HCT116 (cell line): ENCODE measurements at regions of chr5 and their contacts with region 1.

Region 1: DNA sequence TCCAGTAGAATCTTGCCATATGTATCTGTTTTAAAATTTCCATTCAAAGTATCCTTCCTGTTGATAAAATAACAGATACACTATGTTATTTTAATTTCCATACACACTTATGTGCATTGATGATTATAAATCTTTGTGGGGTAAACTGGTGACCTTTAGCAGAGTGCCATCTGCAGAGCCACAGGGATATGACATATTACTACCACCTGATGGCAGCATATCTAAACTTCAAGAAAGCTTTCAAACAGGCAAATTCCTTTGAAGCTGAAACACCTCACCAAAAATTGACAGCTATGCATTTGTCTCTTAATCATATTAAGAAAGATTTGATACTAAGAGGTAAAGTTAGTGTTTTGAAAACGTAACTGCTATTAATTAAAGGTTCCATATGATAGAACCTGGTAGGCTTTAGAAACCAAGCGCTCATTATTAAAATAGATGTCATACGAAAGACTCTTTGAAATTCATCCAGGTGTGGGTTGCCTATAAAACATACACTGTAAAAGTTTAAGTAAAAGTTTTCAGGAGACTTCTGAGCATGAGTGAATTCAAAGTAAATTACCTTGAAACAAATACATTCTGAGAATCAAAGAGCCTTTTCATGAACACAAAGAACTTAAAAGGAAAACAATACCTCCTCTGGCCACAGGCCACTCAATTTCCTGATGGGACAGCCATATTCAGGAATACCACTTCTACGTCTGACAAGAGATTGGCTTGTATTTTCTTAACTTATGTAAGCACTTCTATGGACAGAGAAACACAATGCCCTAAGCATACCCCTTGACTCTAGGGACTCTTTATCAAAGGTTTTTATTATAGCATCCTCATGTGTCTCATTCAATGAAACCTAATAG is 93.3 kb downstream of the KIAA0825 start:
- DNase-seq: peak; percentile 32
- ATAC-seq: peak; percentile 86
- H3K4me3 ChIP-seq: no peak overlapping the region
- H3K27ac ChIP-seq: no peak overlapping the region
- H3K4me1 ChIP-seq: no peaks in the 10 kb centered on the region
- H3K27me3 ChIP-seq: no peaks in the 10 kb centered on the region
- CTCF ChIP-seq: peak; percentile 56 to 78 (median 57); a peak in 5 of 6 replicates
- POLR2A ChIP-seq: no peak
- RAD21 ChIP-seq: peak; percentile 69

Region 2: GRCh38 chr5:94228404-94229190 is 296.5 kb before region 1 on chr5:
- CTCF ChIA-PET with region 1: no interaction called
- POLR2A ChIA-PET with region 1: no interaction called
- RAD21 ChIA-PET with region 1: no interaction called
- intact Hi-C with region 1: no loop called
- DNase-seq: no peak
- ATAC-seq: peak; percentile 25; the same call in 1 of the 2 replicates
- H3K4me3 ChIP-seq: no peak overlapping the region
- H3K27ac ChIP-seq: no peak overlapping the region
- H3K4me1 ChIP-seq: peaks cover 0 to 6% of the 10 kb centered on the region in 2 experiments; a peak in 1 of 4 replicates
- H3K27me3 ChIP-seq: no peaks in the 10 kb centered on the region
- CTCF ChIP-seq: no peak
- POLR2A ChIP-seq: no peak
- RAD21 ChIP-seq: no peak

Region 3: GRCh38 chr5:94693043-94693822 is 168.2 kb after region 1 on chr5:
- CTCF ChIA-PET with region 1: no interaction called
- POLR2A ChIA-PET with region 1: no interaction called
- RAD21 ChIA-PET with region 1: no interaction called
- intact Hi-C with region 1: loop called (anchors 2 kb)
- DNase-seq: peak; percentile 29
- ATAC-seq: peak; percentile 63
- H3K4me3 ChIP-seq: no peak overlapping the region
- H3K27ac ChIP-seq: no peak overlapping the region
- H3K4me1 ChIP-seq: no peaks in the 10 kb centered on the region
- H3K27me3 ChIP-seq: no peaks in the 10 kb centered on the region
- CTCF ChIP-seq: peak; percentile 18 to 48 (median 34); a peak in 3 of 6 replicates
- POLR2A ChIP-seq: no peak
- RAD21 ChIP-seq: peak; percentile 52; the same call in 1 of the 2 replicates

Region 4: GRCh38 chr5:94740286-94740685 is 215.2 kb after region 1 on chr5:
- CTCF ChIA-PET with region 1: interaction called, 14 read pairs
- POLR2A ChIA-PET with region 1: no interaction called
- RAD21 ChIA-PET with region 1: interaction called in 1 of 2 experiments, 4 read pairs
- intact Hi-C with region 1: loop called (anchors 1 kb)
- DNase-seq: no peak
- ATAC-seq: no peak
- H3K4me3 ChIP-seq: no peak overlapping the region
- H3K27ac ChIP-seq: no peak overlapping the region
- H3K4me1 ChIP-seq: no peaks in the 10 kb centered on the region
- H3K27me3 ChIP-seq: no peaks in the 10 kb centered on the region
- CTCF ChIP-seq: no peak
- POLR2A ChIP-seq: no peak
- RAD21 ChIP-seq: no peak

Region 5: GRCh38 chr5:94802450-94802849 is 277.4 kb after region 1 on chr5:
- CTCF ChIA-PET with region 1: no interaction called
- POLR2A ChIA-PET with region 1: no interaction called
- RAD21 ChIA-PET with region 1: no interaction called
- intact Hi-C with region 1: no loop called
- DNase-seq: no peak
- ATAC-seq: no peak
- H3K4me3 ChIP-seq: no peak overlapping the region
- H3K27ac ChIP-seq: no peak overlapping the region
- H3K4me1 ChIP-seq: no peaks in the 10 kb centered on the region
- H3K27me3 ChIP-seq: no peaks in the 10 kb centered on the region
- CTCF ChIP-seq: no peak
- POLR2A ChIP-seq: no peak
- RAD21 ChIP-seq: no peak

Region 6: DNA sequence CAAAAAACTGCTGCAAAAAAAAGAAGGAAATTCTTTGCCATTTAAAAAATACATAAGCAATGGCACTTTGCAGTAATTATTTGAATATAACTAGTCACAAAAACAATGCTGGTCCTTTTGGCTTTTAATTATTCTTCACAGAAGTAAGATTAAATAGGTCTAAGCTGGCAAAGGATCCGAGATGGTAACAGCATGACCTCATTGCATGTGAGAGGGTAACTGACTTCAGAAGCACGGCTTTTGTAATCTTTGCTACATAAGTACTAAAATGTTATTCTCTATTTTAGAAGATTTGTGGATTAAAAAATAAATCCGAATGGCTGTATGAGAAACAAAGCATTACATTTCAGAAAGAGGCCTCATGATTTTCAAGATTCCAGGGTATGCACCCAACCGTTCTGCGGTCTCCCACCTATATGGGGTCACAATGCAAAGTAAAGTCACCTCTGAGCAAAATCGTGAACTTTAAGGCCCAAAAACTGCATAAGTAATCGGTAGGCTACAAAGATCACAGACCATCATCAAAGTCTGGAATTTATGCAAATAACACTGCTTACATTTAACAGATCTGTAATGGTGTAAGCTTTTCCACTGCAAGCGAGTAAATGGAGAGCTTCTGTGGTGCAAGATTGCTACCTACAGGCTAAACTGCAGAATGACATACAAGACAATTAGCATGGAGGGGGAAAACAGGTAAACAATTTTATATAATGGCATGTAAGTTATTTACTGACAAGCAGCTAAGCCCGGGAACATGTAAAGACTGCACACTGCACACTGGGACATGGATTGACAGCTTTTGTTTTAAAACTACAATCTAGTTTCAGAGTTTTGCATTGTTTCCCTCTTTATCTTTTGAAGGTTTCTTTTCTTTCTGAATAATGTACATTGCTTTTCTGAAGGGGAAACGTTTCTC is 325.0 kb after region 1 on chr5:
- CTCF ChIA-PET with region 1: interaction called, 7 read pairs
- POLR2A ChIA-PET with region 1: no interaction called
- RAD21 ChIA-PET with region 1: no interaction called
- intact Hi-C with region 1: loop called (anchors 5 kb)
- DNase-seq: peak; percentile 59
- ATAC-seq: peak; percentile 96
- H3K4me3 ChIP-seq: peak overlapping the region in 1 of 2 experiments; percentile 18; a peak in 2 of 4 replicates
- H3K27ac ChIP-seq: no peak overlapping the region
- H3K4me1 ChIP-seq: 0 out of 4 replicates have a peak, but pooled peaks cover 0 to 4% of the 10 kb centered on the region in 2 experiments
- H3K27me3 ChIP-seq: no peaks in the 10 kb centered on the region
- CTCF ChIP-seq: peak; percentile 58 to 85 (median 69); a peak in 5 of 6 replicates
- POLR2A ChIP-seq: no peak
- RAD21 ChIP-seq: peak; percentile 83

Region 7: GRCh38 chr5:94893412-94894135 is 368.5 kb after region 1 on chr5:
- CTCF ChIA-PET with region 1: interaction called, 4 read pairs
- POLR2A ChIA-PET with region 1: no interaction called
- RAD21 ChIA-PET with region 1: no interaction called
- intact Hi-C with region 1: loop called (anchors 1 kb)
- DNase-seq: peak; percentile 34
- ATAC-seq: peak; percentile 86
- H3K4me3 ChIP-seq: no peak overlapping the region
- H3K27ac ChIP-seq: no peak overlapping the region
- H3K4me1 ChIP-seq: no peaks in the 10 kb centered on the region
- H3K27me3 ChIP-seq: no peaks in the 10 kb centered on the region
- CTCF ChIP-seq: peak; percentile 55 to 69 (median 58); a peak in 5 of 6 replicates
- POLR2A ChIP-seq: no peak
- RAD21 ChIP-seq: peak; percentile 77